Activated CD4-positive, alpha-beta T cell treated with anti-CD3 and anti-CD28 coated beads for 36 hours (primary cell): ENCODE measurements at regions of chr12 and their contacts with region 1.

Region 1: DNA sequence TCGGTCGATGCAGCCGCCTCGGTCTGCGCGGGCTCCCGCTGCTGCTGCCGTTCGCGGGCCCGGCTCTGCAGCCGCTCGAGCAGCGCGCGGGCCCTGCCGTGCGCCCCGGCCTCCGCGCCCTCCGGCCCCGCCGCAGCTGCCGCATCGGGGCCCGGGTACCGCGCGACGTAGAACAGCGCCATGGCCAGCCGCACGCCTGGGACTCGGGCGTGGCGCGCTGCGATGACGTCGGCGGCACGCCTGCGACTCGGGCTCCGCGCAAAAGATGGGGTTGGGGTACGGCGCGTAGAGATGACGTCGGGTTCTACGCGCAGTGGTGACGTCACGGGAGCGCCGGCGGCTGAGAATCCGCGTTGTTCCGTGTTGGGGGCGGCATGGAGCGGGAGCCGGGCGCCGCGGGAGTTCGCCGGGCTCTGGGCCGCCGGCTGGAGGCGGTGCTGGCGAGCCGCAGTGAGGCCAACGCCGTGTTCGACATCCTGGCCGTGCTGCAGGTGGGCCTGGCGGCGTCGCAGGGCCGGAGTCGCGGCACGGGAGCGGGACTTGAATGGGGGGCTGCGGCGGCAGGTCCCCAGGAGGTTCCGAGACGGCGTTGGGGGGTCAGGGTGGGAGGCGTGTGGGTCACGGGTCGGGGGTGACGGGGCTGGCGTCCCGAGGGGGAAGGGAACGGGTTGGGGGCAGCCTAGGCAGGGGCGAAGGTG is at the starts of genes DDX51 and NOC4L:
- DNase-seq: peak; percentile 97
- ATAC-seq: peak; percentile 94
- H3K4me3 Mint-ChIP-seq: peak within 1 kb of the TSS; percentile 88
- H3K27ac Mint-ChIP-seq: peak within 1 kb of the TSS; percentile 86
- H3K4me1 Mint-ChIP-seq: peaks cover 32% of the 10 kb centered on the region
- H3K27me3 Mint-ChIP-seq: no peaks in the 10 kb centered on the region
- total RNA-seq, gene DDX51: 19.2 to 31.4 TPM
- total RNA-seq, gene NOC4L: 30.5 to 35.7 TPM

Region 2: GRCh38 chr12:131684015-131684725 is 460.1 kb before region 1 on chr12:
- CTCF ChIA-PET with region 1: no interaction called
- POLR2A ChIA-PET with region 1: no interaction called
- intact Hi-C with region 1: loop called in 1 of 2 experiments (anchors 1 kb)
- DNase-seq: peak; percentile 25
- ATAC-seq: no peak
- H3K4me3 Mint-ChIP-seq: no peak overlapping the region
- H3K27ac Mint-ChIP-seq: no peak overlapping the region
- H3K4me1 Mint-ChIP-seq: peaks cover 14% of the 10 kb centered on the region
- H3K27me3 Mint-ChIP-seq: peaks cover 5% of the 10 kb centered on the region

Region 3: DNA sequence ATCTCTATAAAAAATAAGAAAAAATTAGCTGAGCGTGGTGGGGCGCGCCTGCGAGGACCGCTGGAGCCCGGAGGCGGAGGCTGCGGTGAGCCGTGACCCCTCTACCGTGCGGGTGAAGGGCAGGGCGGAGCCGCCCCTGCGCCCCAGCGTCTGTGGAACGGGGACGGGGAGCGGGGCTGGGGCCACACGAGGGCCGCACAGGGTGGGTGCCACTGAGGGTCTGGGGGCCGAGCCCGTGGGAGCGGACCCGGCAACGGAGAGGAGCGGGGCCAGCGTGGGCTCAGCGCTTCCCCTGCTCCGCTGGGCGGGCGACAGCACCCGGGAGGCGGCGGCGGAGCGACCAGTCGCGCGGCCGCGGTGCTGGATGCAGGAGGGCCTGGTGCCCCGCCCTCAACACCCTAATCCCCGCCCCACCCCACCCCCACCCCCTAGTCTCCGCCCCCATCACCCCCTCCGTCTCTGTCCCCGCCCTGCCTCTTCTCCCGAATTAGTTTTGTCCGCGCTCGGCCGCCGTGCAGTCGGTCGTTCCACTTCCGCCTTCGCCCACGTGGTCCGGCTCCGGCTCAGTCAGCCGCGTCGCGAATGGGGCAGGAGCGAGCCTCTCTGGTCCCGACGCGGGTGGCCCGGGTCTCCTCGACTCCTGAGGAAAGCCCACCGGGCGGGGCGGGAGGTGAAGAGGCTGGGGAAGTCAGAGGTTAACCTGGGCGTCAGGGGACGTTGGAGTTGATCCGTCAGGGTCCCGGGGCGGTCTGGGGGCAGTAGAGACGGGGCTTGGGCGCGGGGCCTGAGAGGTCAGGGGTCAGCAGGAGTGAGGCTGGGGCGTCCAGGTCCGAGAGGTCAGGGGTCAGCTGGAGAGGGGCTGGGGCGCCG is 215.3 kb before region 1 on chr12 and contains the start of gene PUS1:
- CTCF ChIA-PET with region 1: no interaction called
- POLR2A ChIA-PET with region 1: no interaction called
- intact Hi-C with region 1: loop called in 1 of 2 experiments (anchors 1 kb)
- DNase-seq: peak; percentile 97
- ATAC-seq: peak; percentile 89
- H3K4me3 Mint-ChIP-seq: peak within 1 kb of the TSS; percentile 97
- H3K27ac Mint-ChIP-seq: peak within 1 kb of the TSS; percentile 85
- H3K4me1 Mint-ChIP-seq: peaks cover 25% of the 10 kb centered on the region
- H3K27me3 Mint-ChIP-seq: no peaks in the 10 kb centered on the region
- total RNA-seq, gene PUS1: 37.8 to 56.5 TPM

Region 4: DNA sequence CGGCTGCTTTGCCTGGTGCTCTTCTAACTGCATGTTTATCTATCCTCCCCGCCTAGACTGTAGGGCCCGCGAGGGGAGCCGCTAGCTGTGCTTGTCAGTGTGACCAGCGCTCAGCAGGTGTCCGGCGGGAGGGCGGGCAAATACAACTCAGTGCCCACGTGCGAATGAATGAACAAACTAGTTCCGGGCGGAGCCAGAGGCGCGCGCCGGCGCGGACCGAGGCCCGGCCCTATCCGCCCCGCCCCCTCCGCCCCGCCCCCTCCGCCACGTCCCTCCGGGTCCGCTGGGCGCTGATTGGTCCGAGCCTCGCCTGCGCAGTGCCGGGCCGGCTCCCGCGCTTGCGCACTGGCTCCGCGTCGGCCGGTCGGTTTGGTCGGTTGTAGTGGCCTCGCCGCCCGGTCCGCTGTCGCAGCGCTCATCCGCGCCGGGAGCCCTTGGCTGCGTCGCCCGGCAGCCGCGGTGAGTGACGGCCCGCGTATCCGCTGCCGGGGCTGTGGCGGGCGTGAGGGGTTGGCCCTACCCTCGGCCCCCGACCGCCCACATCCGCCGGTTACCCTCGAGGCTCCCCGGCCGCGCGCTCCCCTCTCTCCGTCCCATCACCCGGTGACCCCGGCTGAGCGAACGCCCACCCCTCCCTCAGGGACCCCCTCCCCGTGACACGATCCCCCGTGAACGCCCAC is 60.2 kb before region 1 on chr12:
- CTCF ChIA-PET with region 1: no interaction called
- POLR2A ChIA-PET with region 1: no interaction called
- intact Hi-C with region 1: loop called in 1 of 2 experiments (anchors 1 kb)
- DNase-seq: peak; percentile 94
- ATAC-seq: peak; percentile 95
- H3K4me3 Mint-ChIP-seq: peak overlapping the region; percentile 86
- H3K27ac Mint-ChIP-seq: peak overlapping the region; percentile 91
- H3K4me1 Mint-ChIP-seq: peaks cover 23% of the 10 kb centered on the region
- H3K27me3 Mint-ChIP-seq: no peaks in the 10 kb centered on the region

Region 5: DNA sequence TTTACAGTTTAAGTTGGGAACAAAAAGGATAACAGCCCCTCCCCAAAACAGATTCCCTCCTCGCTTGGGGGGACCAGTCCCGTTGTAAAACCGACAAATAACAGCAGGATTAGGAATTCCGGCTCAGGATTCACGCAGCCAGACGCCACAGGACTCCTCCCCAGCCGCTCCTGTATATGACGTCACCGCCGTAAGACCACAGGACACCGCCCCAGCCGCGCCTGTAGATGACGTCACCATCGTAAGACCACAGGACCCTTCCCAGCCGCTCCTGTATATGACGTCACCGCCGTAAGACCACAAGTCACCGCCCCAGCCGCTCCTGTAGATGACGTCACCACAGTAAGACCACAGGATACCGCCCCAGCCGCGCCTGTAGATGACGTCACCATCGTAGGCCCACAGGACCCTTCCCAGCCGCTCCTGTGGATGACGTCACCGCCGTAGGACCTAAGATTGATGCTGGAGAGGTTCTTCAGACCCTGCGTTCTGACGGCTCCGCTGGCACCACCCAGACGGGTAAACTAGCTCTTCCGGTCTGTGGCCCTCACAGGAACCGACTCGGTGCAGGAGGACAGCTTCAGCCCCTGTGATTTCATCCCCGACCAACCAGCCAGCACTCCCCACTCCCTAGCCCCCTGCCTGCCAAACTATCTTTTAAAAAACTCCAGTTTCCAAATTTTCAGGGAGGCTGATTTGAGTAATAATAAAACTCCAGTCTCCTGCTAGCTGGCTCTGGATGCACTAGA is 301.8 kb after region 1 on chr12:
- CTCF ChIA-PET with region 1: no interaction called
- POLR2A ChIA-PET with region 1: no interaction called
- intact Hi-C with region 1: loop called in 1 of 2 experiments (anchors 1 kb)
- DNase-seq: peak; percentile 79
- ATAC-seq: peak; percentile 22
- H3K4me3 Mint-ChIP-seq: peak overlapping the region; percentile 87
- H3K27ac Mint-ChIP-seq: peak overlapping the region; percentile 100
- H3K4me1 Mint-ChIP-seq: peaks cover 45% of the 10 kb centered on the region
- H3K27me3 Mint-ChIP-seq: no peaks in the 10 kb centered on the region

Region 6: DNA sequence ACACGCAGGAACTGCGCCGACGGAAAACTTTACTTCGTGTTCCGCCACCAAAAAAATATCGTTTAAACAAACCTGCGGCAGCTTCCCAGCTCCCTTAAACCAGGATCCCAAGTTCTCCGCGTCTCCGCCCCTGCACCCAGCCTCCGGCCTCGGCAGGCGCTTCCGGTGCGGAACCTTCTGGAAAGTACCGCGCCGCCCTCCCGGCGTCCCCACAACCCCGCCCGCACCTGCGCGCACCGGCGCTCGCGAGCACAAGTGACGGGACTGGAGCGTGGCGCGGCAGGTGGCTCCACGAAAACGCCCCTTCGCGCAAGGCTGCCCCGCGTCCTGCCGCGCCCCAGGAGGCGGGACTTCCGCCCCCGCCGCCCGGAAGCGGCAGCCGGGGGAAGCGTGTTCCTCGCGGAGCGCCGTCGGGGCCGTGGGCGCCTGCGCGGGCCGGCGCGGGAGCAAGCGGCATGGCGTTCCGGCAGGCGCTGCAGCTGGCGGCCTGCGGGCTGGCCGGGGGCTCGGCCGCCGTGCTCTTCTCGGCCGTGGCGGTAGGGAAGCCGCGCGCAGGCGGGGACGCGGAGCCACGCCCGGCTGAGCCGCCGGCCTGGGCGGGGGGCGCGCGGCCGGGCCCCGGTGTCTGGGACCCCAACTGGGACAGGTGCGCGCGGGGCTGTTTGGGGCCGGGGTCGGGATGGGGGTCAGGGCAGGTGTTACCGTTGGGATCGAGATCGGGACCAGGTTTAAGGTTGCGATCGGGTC is 566.3 kb after region 1 on chr12 and contains the start of gene PGAM5:
- CTCF ChIA-PET with region 1: no interaction called
- POLR2A ChIA-PET with region 1: no interaction called
- intact Hi-C with region 1: loop called in 1 of 2 experiments (anchors 10 kb)
- DNase-seq: peak; percentile 92
- ATAC-seq: peak; percentile 92
- H3K4me3 Mint-ChIP-seq: peak within 1 kb of the TSS; percentile 75
- H3K27ac Mint-ChIP-seq: peak within 1 kb of the TSS; percentile 66
- H3K4me1 Mint-ChIP-seq: peaks cover 24% of the 10 kb centered on the region
- H3K27me3 Mint-ChIP-seq: no peaks in the 10 kb centered on the region
- total RNA-seq, gene PGAM5: 65.6 to 74.0 TPM